PC-3 (cell line): ENCODE measurements at regions of chr7 and their contacts with region 1.

Region 1: GRCh38 chr7:123797673-123798527 is 47.1 kb upstream of the HYAL4 start:
- DNase-seq: peak; percentile 94
- ATAC-seq: peak; percentile 89
- H3K4me3 ChIP-seq: peak overlapping the region; percentile 35; the same call in 1 of the 2 replicates
- H3K27ac ChIP-seq: 0 out of 2 replicates have a peak overlapping the region, but pooled peaks have one; percentile 8
- H3K4me1 ChIP-seq: peaks cover 19% of the 10 kb centered on the region
- H3K27me3 ChIP-seq: no peaks in the 10 kb centered on the region
- CTCF ChIP-seq: peak; percentile 84

Region 2: DNA sequence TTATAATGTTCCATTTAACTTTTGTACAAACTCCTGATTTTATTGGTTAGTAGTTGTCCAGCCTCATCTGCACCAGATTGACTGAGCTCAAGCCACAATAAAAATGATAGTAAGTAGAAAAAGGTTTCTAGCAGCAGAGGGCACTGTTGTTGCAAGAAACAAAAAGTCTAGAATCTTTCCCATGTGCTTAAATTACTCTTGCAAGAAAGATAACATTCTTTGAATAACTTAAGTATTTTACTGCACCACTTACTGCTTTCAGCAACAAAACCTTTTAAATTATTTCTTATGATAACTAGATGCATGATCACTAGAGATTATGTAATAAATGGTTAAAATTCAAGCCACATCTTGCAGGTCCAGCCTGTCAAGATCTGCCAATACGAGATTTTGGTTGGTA is 115.2 kb before region 1 on chr7:
- CTCF ChIA-PET with region 1: interaction called, 14 read pairs
- POLR2A ChIA-PET with region 1: no interaction called
- intact Hi-C with region 1: loop called (anchors 1 kb)
- DNase-seq: peak; percentile 78
- ATAC-seq: peak; percentile 72
- H3K4me3 ChIP-seq: no peak overlapping the region
- H3K27ac ChIP-seq: no peak overlapping the region
- H3K4me1 ChIP-seq: no peaks in the 10 kb centered on the region
- H3K27me3 ChIP-seq: no peaks in the 10 kb centered on the region
- CTCF ChIP-seq: peak; percentile 65

Region 3: GRCh38 chr7:123770378-123770777 is 27.5 kb before region 1 on chr7:
- CTCF ChIA-PET with region 1: interaction called, 8 read pairs
- POLR2A ChIA-PET with region 1: interaction called, 3 read pairs
- intact Hi-C with region 1: loop called (anchors 1 kb)
- DNase-seq: peak; percentile 89
- ATAC-seq: peak; percentile 73
- H3K4me3 ChIP-seq: peak overlapping the region; percentile 43
- H3K27ac ChIP-seq: peak overlapping the region; percentile 75
- H3K4me1 ChIP-seq: peaks cover 60% of the 10 kb centered on the region
- H3K27me3 ChIP-seq: no peaks in the 10 kb centered on the region
- CTCF ChIP-seq: no peak

Region 4: GRCh38 chr7:123865517-123866117 is 67.7 kb after region 1 on chr7:
- CTCF ChIA-PET with region 1: interaction called, 13 read pairs
- POLR2A ChIA-PET with region 1: no interaction called
- intact Hi-C with region 1: loop called (anchors 1 kb)
- DNase-seq: peak; percentile 78
- ATAC-seq: peak; percentile 95
- H3K4me3 ChIP-seq: no peak overlapping the region
- H3K27ac ChIP-seq: no peak overlapping the region
- H3K4me1 ChIP-seq: peaks cover 7% of the 10 kb centered on the region
- H3K27me3 ChIP-seq: no peaks in the 10 kb centered on the region
- CTCF ChIP-seq: peak; percentile 82

Region 5: DNA sequence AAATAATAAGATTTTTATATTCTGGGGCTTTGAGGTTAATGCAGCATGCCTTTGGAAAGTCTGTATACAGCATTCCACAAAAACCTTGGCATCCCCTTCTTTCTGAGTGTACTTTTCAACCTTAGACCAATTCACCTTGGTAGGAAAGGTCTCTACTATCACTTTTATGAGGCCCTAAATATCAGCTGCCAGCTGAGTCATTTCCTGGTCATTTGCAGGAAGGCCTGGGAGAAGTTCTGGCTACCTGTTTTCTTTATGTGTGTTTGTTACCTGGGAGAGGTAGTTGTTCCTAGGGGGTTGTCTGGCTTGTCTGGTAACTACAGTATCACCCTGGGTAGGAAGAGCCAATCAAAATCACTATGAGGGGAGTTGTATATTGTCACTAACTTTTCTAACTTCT is 131.2 kb after region 1 on chr7:
- CTCF ChIA-PET with region 1: no interaction called
- POLR2A ChIA-PET with region 1: no interaction called
- intact Hi-C with region 1: loop called (anchors 2 kb)
- DNase-seq: peak; percentile 95
- ATAC-seq: peak; percentile 96
- H3K4me3 ChIP-seq: no peak overlapping the region
- H3K27ac ChIP-seq: peak overlapping the region; percentile 55
- H3K4me1 ChIP-seq: peaks cover 14% of the 10 kb centered on the region
- H3K27me3 ChIP-seq: no peaks in the 10 kb centered on the region
- CTCF ChIP-seq: no peak